ENCODE measurements at regions of chr17 and their contacts with region 1.

Region 1: GRCh38 chr17:21689604-21690003 is 2.7 kb upstream of the KCNJ18 start:
- DNase-seq: peak in 3 of 4 donors; percentile 9 to 75 (median 48)
- ATAC-seq: peak; percentile 68
- H3K4me3 ChIP-seq: no peak overlapping the region
- H3K27ac ChIP-seq: no peak overlapping the region
- H3K4me1 ChIP-seq: no peaks in the 10 kb centered on the region
- H3K27me3 ChIP-seq: no peaks in the 10 kb centered on the region
- CTCF ChIP-seq: no peak

Region 2: GRCh38 chr17:21400816-21401593 is 288.6 kb before region 1 on chr17:
- intact Hi-C with region 1: loop called in 1 of 2 experiments (anchors 10 kb)
- DNase-seq: peak in 1 of 4 donors; percentile 76
- ATAC-seq: no peak
- H3K4me3 ChIP-seq: no peak overlapping the region
- H3K27ac ChIP-seq: no peak overlapping the region
- H3K4me1 ChIP-seq: no peaks in the 10 kb centered on the region
- H3K27me3 ChIP-seq: no peaks in the 10 kb centered on the region
- CTCF ChIP-seq: no peak

Measured in left lung (tissue), 14 donors.